ENCODE measurements at regions of chr6 and their contacts with region 1.

Region 1: GRCh38 chr6:3593161-3593560 is 136.3 kb upstream of the SLC22A23 start:
- DNase-seq: no peak
- ATAC-seq: no peak
- H3K4me3 ChIP-seq: no peak overlapping the region
- H3K27ac ChIP-seq: no peak overlapping the region
- H3K4me1 ChIP-seq: peaks cover 0 to 10% of the 10 kb centered on the region in 2 experiments; a peak in 2 of 4 replicates
- H3K27me3 ChIP-seq: no peaks in the 10 kb centered on the region
- CTCF ChIP-seq: no peak
- POLR2A ChIP-seq: no peak
- RAD21 ChIP-seq: no peak

Region 2: GRCh38 chr6:3643921-3644738 is 51.0 kb after region 1 on chr6:
- CTCF ChIA-PET with region 1: no interaction called
- POLR2A ChIA-PET with region 1: no interaction called
- RAD21 ChIA-PET with region 1: no interaction called
- intact Hi-C with region 1: loop called (anchors 1 kb)
- DNase-seq: no peak
- ATAC-seq: no peak
- H3K4me3 ChIP-seq: no peak overlapping the region
- H3K27ac ChIP-seq: no peak overlapping the region
- H3K4me1 ChIP-seq: no peaks in the 10 kb centered on the region
- H3K27me3 ChIP-seq: peaks cover 8% of the 10 kb centered on the region; the same call in 1 of the 2 replicates
- CTCF ChIP-seq: no peak
- POLR2A ChIP-seq: no peak
- RAD21 ChIP-seq: no peak